T-cell (primary cell): ENCODE measurements at regions of chr11 and their contacts with region 1.

Region 1: DNA sequence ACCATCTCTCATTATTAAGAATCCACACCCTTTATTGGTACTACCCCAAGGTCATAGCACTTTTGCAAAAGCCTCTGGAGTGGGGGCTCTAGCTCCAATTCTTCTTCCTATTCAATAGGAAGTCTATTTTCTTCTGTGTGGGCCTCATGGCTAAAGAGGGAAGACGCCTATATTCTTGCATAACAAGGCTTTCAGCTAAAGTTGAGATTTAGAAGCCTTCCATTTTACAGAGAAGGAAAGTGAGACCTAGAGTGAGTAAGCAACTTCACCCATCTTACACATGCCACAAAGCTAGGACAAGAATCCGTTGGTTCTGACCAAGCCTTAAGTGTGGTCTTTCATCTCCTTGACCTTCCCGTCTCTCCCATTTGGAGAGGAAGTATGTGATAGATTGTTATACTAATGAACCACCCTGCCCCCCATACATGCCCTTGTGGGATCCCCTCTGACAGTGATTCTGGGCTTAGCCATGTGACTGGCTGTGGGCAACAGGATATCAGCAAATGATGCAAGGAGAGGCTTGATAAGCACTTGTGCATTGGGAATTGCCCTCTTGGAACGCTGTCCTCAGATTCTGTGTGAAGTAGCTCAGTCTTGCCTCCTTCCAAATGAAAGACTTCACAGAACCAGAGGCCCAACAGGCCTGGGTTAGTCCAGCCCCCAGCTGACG is 12.3 kb downstream of the BACE1 start:
- DNase-seq: no peak
- ATAC-seq: no peak
- H3K4me3 ChIP-seq: no peak overlapping the region
- H3K4me3 Mint-ChIP-seq: no peak overlapping the region
- H3K27ac ChIP-seq: no peak overlapping the region
- H3K27ac Mint-ChIP-seq: no peak overlapping the region
- H3K4me1 ChIP-seq: no peaks in the 10 kb centered on the region
- H3K4me1 Mint-ChIP-seq: peaks cover 0 to 4% (median 0%) of the 10 kb centered on the region in 3 donors
- H3K27me3 ChIP-seq: peaks cover 0 to 21% of the 10 kb centered on the region in 2 experiments
- H3K27me3 Mint-ChIP-seq: peaks cover 0 to 3% of the 10 kb centered on the region in 2 donors

Region 2: DNA sequence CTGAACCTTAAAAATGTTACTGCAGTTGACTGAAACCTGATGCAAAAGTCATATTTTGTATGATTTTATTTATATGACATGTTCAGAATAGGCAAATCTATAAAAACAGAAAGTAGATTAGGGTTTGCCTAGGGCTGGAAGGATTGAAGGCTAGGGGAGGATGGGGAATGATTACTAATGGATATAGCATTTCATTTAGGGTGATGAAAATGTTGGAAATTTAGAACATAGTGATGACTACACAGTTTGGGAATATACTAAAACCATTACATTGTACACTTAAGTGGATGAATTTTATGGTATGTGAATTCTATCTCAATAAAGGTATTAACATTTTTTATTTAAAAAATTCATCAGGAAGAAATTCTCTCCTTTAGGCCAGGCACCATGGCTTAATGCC is 182.6 kb before region 1 on chr11:
- CTCF ChIA-PET with region 1: no interaction called
- POLR2A ChIA-PET with region 1: no interaction called
- DNase-seq: no peak
- ATAC-seq: no peak
- H3K4me3 ChIP-seq: no peak overlapping the region
- H3K4me3 Mint-ChIP-seq: no peak overlapping the region
- H3K27ac ChIP-seq: no peak overlapping the region
- H3K27ac Mint-ChIP-seq: no peak overlapping the region
- H3K4me1 ChIP-seq: no peaks in the 10 kb centered on the region
- H3K4me1 Mint-ChIP-seq: no peaks in the 10 kb centered on the region
- H3K27me3 ChIP-seq: no peaks in the 10 kb centered on the region
- H3K27me3 Mint-ChIP-seq: no peaks in the 10 kb centered on the region

Region 3: GRCh38 chr11:117281159-117281558 is 22.6 kb before region 1 on chr11:
- CTCF ChIA-PET with region 1: no interaction called
- POLR2A ChIA-PET with region 1: interaction called in 1 of 2 experiments, 10 read pairs
- DNase-seq: no peak
- ATAC-seq: no peak
- H3K4me3 ChIP-seq: peak overlapping the region in 1 of 2 donors; percentile 16
- H3K4me3 Mint-ChIP-seq: peak overlapping the region; percentile 68 to 75 (median 71)
- H3K27ac ChIP-seq: no peak overlapping the region
- H3K27ac Mint-ChIP-seq: peak overlapping the region; percentile 92 to 99
- H3K4me1 ChIP-seq: peaks cover 2 to 27% of the 10 kb centered on the region in 2 experiments
- H3K4me1 Mint-ChIP-seq: peaks cover 15 to 52% (median 35%) of the 10 kb centered on the region in 3 donors
- H3K27me3 ChIP-seq: no peaks in the 10 kb centered on the region
- H3K27me3 Mint-ChIP-seq: no peaks in the 10 kb centered on the region

Region 4: GRCh38 chr11:117345039-117345438 is 41.3 kb after region 1 on chr11:
- CTCF ChIA-PET with region 1: no interaction called
- POLR2A ChIA-PET with region 1: interaction called in 1 of 2 experiments, 10 read pairs
- DNase-seq: no peak
- ATAC-seq: no peak
- H3K4me3 ChIP-seq: no peak overlapping the region
- H3K4me3 Mint-ChIP-seq: no peak overlapping the region
- H3K27ac ChIP-seq: no peak overlapping the region
- H3K27ac Mint-ChIP-seq: no peak overlapping the region
- H3K4me1 ChIP-seq: no peaks in the 10 kb centered on the region
- H3K4me1 Mint-ChIP-seq: peaks cover 0 to 3% (median 0%) of the 10 kb centered on the region in 3 donors
- H3K27me3 ChIP-seq: no peaks in the 10 kb centered on the region
- H3K27me3 Mint-ChIP-seq: no peaks in the 10 kb centered on the region

Region 5: GRCh38 chr11:118398791-118399559 is 1095.2 kb after region 1 on chr11:
- CTCF ChIA-PET with region 1: no interaction called
- POLR2A ChIA-PET with region 1: no interaction called
- DNase-seq: peak in 33 of 35 experiments; percentile 25 to 91 (median 62)
- ATAC-seq: peak; percentile 69 to 90 (median 73)
- H3K4me3 ChIP-seq: no peak overlapping the region
- H3K4me3 Mint-ChIP-seq: peak overlapping the region; percentile 96 to 97 (median 97)
- H3K27ac ChIP-seq: peak overlapping the region; percentile 96
- H3K27ac Mint-ChIP-seq: peak overlapping the region; percentile 100
- H3K4me1 ChIP-seq: peaks cover 26 to 38% of the 10 kb centered on the region in 2 experiments
- H3K4me1 Mint-ChIP-seq: peaks cover 40 to 69% (median 62%) of the 10 kb centered on the region in 3 donors
- H3K27me3 ChIP-seq: no peaks in the 10 kb centered on the region
- H3K27me3 Mint-ChIP-seq: no peaks in the 10 kb centered on the region